Activated T-helper 2 cell treated with anti-CD3 and anti-CD28 coated beads, Interferon-gamma antibody, Interleukin-2, Interleukin-4, amounts not matched to agents 10 μg/mL and 5 μg/mL and 100 μg/mL, durations not matched to agents 14 hours and 24 hours and 36 hours (primary cell): ENCODE measurements at regions of chr19 and their contacts with region 1.

Region 1: DNA sequence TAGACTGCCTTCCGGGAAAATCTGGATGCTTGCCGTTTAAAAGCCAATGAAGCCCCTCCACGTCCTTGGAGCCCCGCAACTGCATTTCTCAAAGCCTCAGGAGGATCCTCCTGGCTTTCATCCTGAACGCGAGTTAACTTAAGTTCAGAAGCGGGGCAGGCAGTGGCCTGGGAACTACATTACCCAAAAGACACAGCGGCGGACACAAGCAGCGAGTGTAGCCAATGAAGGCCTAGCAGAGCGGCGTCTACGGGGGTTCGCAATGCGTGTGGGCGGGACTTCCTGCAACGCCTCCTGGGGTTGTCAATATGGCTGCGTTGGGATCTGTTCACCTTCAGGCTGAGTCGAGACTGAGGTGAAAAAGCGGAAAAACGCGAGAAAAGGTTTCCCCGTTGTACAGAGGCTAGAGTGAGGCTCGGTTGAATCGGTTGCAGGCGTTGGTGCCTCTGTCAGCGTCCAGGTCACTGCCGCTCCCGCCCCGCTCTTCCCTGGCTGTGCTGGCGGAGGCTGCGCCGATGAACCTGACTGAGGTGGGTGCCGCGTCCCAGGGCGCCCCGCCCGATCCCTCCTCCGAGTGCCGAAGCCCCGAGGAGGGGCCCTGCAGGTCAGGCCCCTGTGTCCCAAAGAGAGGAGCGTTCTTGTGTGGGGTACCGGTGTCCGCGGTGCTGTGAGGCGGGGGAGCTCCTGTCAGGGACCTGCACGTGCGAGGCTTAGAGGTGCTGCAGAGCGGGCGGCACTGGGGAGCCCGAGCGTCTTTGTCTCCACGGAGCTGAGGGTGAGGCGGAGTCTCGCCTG is at the start of gene ZNF17:
- DNase-seq: peak; percentile 88
- H3K4me3 Mint-ChIP-seq: peak within 1 kb of the TSS; percentile 92
- H3K27ac Mint-ChIP-seq: peak within 1 kb of the TSS; percentile 63
- H3K4me1 Mint-ChIP-seq: peaks cover 11% of the 10 kb centered on the region
- H3K27me3 Mint-ChIP-seq: no peaks in the 10 kb centered on the region
- total RNA-seq, gene ZNF17: 7.7 and 9.3 TPM in 2 replicates

Region 2: GRCh38 chr19:57527136-57527881 is 116.2 kb after region 1 on chr19 and contains the start of gene ZNF549:
- intact Hi-C with region 1: loop called (anchors 1 kb)
- DNase-seq: peak; percentile 84
- H3K4me3 Mint-ChIP-seq: peak within 1 kb of the TSS; percentile 97
- H3K27ac Mint-ChIP-seq: peak within 1 kb of the TSS; percentile 78
- H3K4me1 Mint-ChIP-seq: peaks cover 15% of the 10 kb centered on the region
- H3K27me3 Mint-ChIP-seq: no peaks in the 10 kb centered on the region
- total RNA-seq, gene ZNF549: 3.5 and 4.1 TPM in 2 replicates